ENCODE measurements at regions of chr15 and their contacts with region 1.

Region 1: GRCh38 chr15:31031471-31032067 is 40.1 kb upstream of the MTMR10 start:
- DNase-seq: no peak
- H3K4me3 Mint-ChIP-seq: no peak overlapping the region
- H3K27ac Mint-ChIP-seq: no peak overlapping the region
- H3K4me1 Mint-ChIP-seq: no peaks in the 10 kb centered on the region
- H3K27me3 Mint-ChIP-seq: peaks cover 18% of the 10 kb centered on the region

Region 2: GRCh38 chr15:30979457-30979856 is 52.1 kb before region 1 on chr15:
- CTCF ChIA-PET with region 1: no interaction called
- POLR2A ChIA-PET with region 1: no interaction called
- intact Hi-C with region 1: loop called (anchors 10 kb)
- DNase-seq: no peak
- H3K4me3 Mint-ChIP-seq: no peak overlapping the region
- H3K27ac Mint-ChIP-seq: no peak overlapping the region
- H3K4me1 Mint-ChIP-seq: peaks cover 24% of the 10 kb centered on the region
- H3K27me3 Mint-ChIP-seq: no peaks in the 10 kb centered on the region

Measured in activated CD4-positive, alpha-beta memory T cell treated with anti-CD3 and anti-CD28 coated beads for 36 hours (primary cell).